ENCODE measurements at regions of chr6 and their contacts with region 1.

Region 1: DNA sequence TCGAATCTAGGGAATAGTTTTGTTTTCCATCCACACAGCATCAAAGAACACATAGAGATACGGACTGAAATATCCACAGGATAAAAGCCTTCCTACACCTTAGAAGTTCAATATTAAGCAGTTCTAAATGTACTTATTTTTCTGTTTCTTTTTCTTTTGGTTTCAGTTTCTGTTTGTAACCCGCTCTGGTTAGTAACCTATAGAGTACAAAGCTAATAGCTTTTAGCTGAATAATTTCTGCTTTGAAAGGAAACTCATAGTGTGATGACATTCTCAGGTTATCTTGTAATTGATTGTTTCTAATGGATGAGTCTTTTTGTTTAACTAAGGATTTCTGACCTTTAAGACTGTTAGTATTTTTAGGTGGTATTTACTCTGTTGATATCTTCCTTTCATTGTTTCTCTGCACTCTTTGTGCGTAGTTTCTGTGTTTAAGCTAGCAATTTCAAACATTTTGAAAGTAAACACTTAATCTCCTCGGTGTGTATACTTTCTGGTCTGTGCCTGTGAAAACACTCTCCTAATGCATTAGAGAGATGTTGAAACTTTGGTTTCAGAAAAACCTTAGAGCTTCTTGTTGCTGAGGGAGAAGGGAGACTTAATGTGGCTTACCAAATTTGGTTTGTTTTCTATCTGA is 385.5 kb downstream of the HDGFL1 start:
- DNase-seq: peak; percentile 49
- ATAC-seq: peak; percentile 78
- H3K4me3 ChIP-seq: peak overlapping the region; percentile 35
- H3K27ac ChIP-seq: peak overlapping the region; percentile 78; the same call in 1 of the 2 replicates
- H3K4me1 ChIP-seq: peaks cover 8% of the 10 kb centered on the region
- H3K27me3 ChIP-seq: no peaks in the 10 kb centered on the region
- CTCF ChIP-seq: no peak
- POLR2A ChIP-seq: no peak
- RAD21 ChIP-seq: no peak

Region 2: DNA sequence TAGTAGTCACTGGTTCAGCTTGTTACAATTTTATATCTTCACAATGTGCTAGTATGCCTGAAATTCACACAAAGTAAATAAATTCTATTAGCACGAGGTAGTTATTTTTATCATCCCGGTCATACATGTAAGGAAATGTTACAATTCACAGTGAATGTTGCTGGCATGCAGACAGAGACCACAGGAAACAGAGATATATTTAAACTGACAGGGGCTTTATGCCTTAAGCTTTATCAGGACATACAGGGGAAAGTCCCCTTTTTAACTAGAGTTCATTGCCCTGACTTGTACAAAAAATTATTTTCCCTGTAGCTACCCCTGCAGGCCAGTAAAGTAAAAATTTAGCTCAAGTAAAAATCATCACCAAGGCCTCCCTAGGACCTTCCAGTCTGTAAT is 459.2 kb after region 1 on chr6:
- CTCF ChIA-PET with region 1: no interaction called
- POLR2A ChIA-PET with region 1: no interaction called
- dilution Hi-C with region 1: no loop called
- in situ Hi-C with region 1: no loop called
- intact Hi-C with region 1: loop called (anchors 10 kb)
- DNase-seq: peak; percentile 92
- ATAC-seq: peak; percentile 87
- H3K4me3 ChIP-seq: no peak overlapping the region
- H3K27ac ChIP-seq: peak overlapping the region; percentile 82
- H3K4me1 ChIP-seq: peaks cover 6% of the 10 kb centered on the region
- H3K27me3 ChIP-seq: no peaks in the 10 kb centered on the region
- CTCF ChIP-seq: peak; percentile 60
- POLR2A ChIP-seq: no peak
- RAD21 ChIP-seq: peak; percentile 63

Measured in IMR-90 (cell line).